PC-3 (cell line): ENCODE measurements at regions of chr18 and their contacts with region 1.

Region 1: DNA sequence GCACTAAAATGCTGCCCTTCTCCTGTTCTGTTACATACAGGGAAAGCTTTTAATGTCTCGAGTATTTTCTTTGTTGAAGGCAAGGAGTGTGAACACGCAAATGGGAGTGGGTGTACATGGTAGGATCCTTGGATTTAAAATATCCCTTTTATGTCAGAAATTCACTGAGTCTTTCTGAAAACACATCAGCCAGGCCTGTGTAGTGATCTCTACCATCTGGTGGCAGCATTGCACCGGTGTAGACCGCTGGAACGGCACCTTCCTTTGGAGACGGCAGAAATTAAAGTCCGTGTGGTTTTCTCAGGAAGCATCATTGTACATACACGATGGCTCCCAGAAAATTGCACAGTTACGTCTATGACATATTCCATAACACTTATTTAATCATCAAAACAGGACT is 515.8 kb downstream of the GALR1 start:
- DNase-seq: peak; percentile 51
- ATAC-seq: peak; percentile 82
- H3K4me3 ChIP-seq: no peak overlapping the region
- H3K27ac ChIP-seq: no peak overlapping the region
- H3K4me1 ChIP-seq: no peaks in the 10 kb centered on the region
- H3K27me3 ChIP-seq: peaks cover 20% of the 10 kb centered on the region
- CTCF ChIP-seq: peak; percentile 68

Region 2: DNA sequence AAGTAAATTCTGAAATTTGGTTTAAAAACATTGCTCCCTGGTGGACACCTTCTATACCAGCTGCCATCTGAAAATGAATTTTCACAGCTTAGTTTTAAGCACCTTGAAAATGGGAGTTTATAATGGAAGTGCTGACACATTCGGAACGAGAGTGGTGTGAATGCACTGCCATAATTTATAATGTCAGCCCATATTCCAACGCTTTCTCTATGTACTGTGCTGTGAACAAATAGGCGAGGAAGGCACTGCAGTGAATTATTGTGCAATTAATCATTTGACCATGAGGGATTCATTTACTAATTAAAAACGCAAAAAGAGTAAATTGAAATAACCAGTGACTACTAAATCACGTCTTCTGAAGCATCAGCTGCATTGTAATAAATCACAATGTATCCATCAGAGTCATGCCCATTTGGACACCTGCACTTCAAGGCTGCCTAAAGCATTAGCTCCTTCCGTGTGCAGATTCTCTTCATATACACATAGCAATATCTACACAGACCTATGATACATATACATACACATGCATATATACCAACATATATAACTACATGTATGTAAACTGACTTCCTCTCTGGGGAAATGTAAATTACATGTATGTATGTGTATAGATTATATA is 184.0 kb after region 1 on chr18:
- CTCF ChIA-PET with region 1: no interaction called
- POLR2A ChIA-PET with region 1: no interaction called
- intact Hi-C with region 1: loop called (anchors 10 kb)
- DNase-seq: no peak
- ATAC-seq: no peak
- H3K4me3 ChIP-seq: no peak overlapping the region
- H3K27ac ChIP-seq: no peak overlapping the region
- H3K4me1 ChIP-seq: no peaks in the 10 kb centered on the region
- H3K27me3 ChIP-seq: peaks cover 47% of the 10 kb centered on the region
- CTCF ChIP-seq: 0 out of 2 replicates have a peak, but pooled peaks have one; percentile 8

Region 3: DNA sequence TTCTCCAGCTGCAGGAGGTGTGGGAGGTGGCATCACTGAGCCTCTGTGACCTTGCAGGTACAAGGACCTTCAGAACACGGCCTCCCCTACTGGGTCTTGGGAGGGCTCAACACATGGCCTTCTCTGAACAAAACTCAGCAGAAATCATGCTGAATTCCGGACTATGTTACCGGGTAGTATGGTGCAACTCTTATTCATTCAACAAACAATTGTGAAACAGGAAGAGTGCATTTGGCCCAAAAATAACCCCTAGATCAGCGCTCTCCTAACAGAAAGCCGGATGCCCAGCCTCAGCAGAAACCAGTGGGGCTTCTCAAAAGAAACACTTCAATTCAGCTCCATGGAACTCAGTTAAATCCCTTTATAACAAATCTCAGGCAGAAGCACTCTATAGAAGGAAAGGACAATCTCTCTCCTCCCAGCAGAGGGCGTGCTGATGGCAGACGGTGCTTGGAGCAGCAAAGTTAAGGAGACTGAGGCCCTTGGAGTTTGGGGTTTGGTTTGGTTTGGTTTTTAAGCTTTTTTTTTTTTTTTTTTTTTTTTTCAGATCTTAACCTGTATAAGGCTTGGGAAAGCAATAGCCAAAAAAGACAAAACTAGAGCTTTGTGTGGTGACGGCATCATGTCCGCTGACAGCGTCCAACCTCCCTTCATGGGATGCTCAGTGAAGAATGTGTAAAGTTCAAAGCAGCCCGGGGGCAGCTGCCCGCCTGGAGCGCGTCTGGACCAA is 1110.0 kb after region 1 on chr18:
- CTCF ChIA-PET with region 1: no interaction called
- POLR2A ChIA-PET with region 1: no interaction called
- intact Hi-C with region 1: loop called (anchors 5 kb)
- DNase-seq: peak; percentile 39
- ATAC-seq: 0 out of 2 replicates have a peak, but pooled peaks have one; percentile 37
- H3K4me3 ChIP-seq: no peak overlapping the region
- H3K27ac ChIP-seq: no peak overlapping the region
- H3K4me1 ChIP-seq: no peaks in the 10 kb centered on the region
- H3K27me3 ChIP-seq: peaks cover 53% of the 10 kb centered on the region
- CTCF ChIP-seq: peak; percentile 65